Endothelial cell of umbilical vein (primary cell): ENCODE measurements at regions of chr1 and their contacts with region 1.

Region 1: DNA sequence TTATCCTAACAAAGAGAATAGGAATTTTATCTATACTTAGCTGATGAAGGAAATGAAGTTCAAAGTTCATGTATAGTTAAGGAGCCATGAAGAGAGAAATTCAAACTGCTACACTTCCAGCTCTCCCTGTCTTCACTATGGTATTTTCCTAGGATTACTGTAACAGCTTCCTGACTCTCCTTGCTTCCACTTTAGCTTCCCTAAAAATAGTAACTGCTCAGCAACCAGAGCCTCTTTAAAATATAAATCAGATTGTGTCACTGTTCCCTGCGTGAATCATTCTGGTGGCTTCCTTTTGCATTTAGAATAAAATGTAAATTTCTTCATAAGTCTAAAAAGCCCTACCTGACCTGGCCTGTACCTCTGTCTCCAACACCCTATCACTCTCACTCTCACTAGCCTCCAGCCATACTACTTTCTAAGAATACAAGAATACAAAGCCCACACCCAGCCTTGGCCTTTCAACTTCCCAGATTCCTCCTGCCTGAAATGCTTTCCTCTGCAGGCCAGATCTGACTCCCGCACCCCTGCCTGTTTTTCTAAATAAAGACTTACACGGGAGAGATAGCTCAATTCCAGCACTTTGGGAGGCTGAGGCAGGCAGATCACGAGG is 30.5 kb downstream of the OR10J1 start:
- DNase-seq: peak; percentile 79
- H3K4me3 ChIP-seq: no peak overlapping the region
- H3K27ac ChIP-seq: peak overlapping the region; percentile 78
- H3K4me1 ChIP-seq: peaks cover 50% of the 10 kb centered on the region
- H3K27me3 ChIP-seq: no peaks in the 10 kb centered on the region
- CTCF ChIP-seq: no peak
- POLR2A ChIP-seq: peak; percentile 25

Region 2: DNA sequence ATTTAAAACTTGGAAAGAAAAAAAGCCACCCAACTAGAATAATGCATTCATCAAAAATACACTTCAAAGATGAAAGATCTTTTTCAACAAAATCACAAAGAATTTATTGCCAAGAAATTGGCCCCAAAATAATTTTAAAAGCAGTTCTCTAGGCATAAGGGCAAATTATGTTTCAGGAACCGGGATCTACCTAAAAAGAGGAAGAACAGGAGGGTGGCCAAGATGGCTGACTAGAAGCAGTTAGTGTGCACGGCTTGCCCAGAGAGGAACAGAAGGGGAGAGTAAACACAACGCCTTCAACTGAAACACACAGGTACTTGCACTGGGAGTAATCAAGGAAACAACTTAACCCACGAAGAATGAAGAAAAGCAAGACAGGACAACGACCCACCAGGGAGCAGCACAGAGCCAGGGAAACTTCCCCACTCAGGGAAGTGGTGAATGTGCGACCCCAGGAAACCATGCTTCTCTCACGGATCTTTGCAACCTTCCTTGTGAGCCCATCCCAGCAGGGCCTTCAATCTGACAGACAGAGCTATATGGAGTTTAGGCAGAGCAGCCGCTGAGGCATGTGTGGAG is 219.3 kb before region 1 on chr1:
- CTCF ChIA-PET with region 1: no interaction called
- POLR2A ChIA-PET with region 1: no interaction called
- dilution Hi-C with region 1: no loop called
- intact Hi-C with region 1: loop called (anchors 1 kb)
- DNase-seq: peak; percentile 28
- H3K4me3 ChIP-seq: no peak overlapping the region
- H3K27ac ChIP-seq: no peak overlapping the region
- H3K4me1 ChIP-seq: no peaks in the 10 kb centered on the region
- H3K27me3 ChIP-seq: no peaks in the 10 kb centered on the region
- CTCF ChIP-seq: peak; percentile 21 to 38
- POLR2A ChIP-seq: no peak

Region 3: GRCh38 chr1:159448181-159448580 is 21.8 kb before region 1 on chr1:
- CTCF ChIA-PET with region 1: no interaction called
- POLR2A ChIA-PET with region 1: no interaction called
- dilution Hi-C with region 1: no loop called
- intact Hi-C with region 1: loop called (anchors 2 kb)
- DNase-seq: peak; percentile 65
- H3K4me3 ChIP-seq: no peak overlapping the region
- H3K27ac ChIP-seq: peak overlapping the region; percentile 71
- H3K4me1 ChIP-seq: peaks cover 17% of the 10 kb centered on the region
- H3K27me3 ChIP-seq: no peaks in the 10 kb centered on the region
- CTCF ChIP-seq: no peak
- POLR2A ChIP-seq: no peak

Region 4: DNA sequence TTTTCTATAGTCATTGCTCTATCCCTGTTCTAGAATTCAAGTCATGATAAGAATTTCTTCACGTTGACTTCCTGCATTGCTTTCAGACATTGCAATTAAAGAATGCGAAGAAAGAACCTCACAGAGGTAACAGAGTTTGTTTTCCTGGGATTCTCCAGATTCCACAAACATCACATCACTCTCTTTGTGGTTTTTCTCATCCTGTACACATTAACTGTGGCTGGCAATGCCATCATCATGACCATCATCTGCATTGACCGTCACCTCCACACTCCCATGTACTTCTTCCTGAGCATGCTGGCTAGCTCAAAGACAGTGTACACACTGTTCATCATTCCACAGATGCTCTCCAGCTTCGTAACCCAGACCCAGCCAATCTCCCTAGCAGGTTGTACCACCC is 128.2 kb after region 1 on chr1:
- CTCF ChIA-PET with region 1: no interaction called
- POLR2A ChIA-PET with region 1: no interaction called
- dilution Hi-C with region 1: no loop called
- intact Hi-C with region 1: loop called (anchors 1 kb)
- DNase-seq: peak; percentile 72
- H3K4me3 ChIP-seq: no peak overlapping the region
- H3K27ac ChIP-seq: peak overlapping the region; percentile 99
- H3K4me1 ChIP-seq: peaks cover 40% of the 10 kb centered on the region
- H3K27me3 ChIP-seq: no peaks in the 10 kb centered on the region
- CTCF ChIP-seq: no peak
- POLR2A ChIP-seq: peak; percentile 45

Region 5: DNA sequence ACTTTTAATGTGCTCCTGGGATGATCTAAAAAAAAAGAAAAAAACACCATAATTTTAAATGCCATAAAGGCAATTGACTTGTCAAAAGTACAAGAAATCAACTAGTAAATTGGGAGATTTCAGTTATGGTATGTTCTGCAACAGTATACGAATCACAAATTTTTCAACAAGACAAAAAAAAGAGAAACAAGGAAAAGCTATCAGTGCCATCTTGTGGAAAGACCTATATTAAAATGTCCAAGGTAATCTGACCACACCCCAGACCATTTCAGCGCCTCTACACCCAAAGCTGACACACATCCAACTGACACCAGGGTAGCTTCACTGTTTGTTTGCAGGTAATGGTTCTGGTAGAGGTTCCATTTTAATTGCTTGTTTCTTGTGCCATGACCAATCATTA is 305.7 kb after region 1 on chr1:
- CTCF ChIA-PET with region 1: interaction called, 7 read pairs
- POLR2A ChIA-PET with region 1: no interaction called
- dilution Hi-C with region 1: loop called (anchors 25 kb)
- intact Hi-C with region 1: loop called (anchors 1 kb)
- DNase-seq: peak; percentile 46
- H3K4me3 ChIP-seq: no peak overlapping the region
- H3K27ac ChIP-seq: peak overlapping the region; percentile 9
- H3K4me1 ChIP-seq: peaks cover 53% of the 10 kb centered on the region
- H3K27me3 ChIP-seq: no peaks in the 10 kb centered on the region
- CTCF ChIP-seq: no peak
- POLR2A ChIP-seq: peak; percentile 49